ENCODE measurements at regions of chr20 and their contacts with region 1.

Region 1: GRCh38 chr20:50904067-50904570 is 27.1 kb downstream of the ADNP start:
- DNase-seq: no peak
- H3K4me3 ChIP-seq: peak overlapping the region in 1 of 2 donors; percentile 0
- H3K27ac ChIP-seq: no peak overlapping the region
- H3K4me1 ChIP-seq: peaks cover 0 to 20% of the 10 kb centered on the region in 2 donors
- H3K27me3 ChIP-seq: no peaks in the 10 kb centered on the region
- CTCF ChIP-seq: no peak

Region 2: DNA sequence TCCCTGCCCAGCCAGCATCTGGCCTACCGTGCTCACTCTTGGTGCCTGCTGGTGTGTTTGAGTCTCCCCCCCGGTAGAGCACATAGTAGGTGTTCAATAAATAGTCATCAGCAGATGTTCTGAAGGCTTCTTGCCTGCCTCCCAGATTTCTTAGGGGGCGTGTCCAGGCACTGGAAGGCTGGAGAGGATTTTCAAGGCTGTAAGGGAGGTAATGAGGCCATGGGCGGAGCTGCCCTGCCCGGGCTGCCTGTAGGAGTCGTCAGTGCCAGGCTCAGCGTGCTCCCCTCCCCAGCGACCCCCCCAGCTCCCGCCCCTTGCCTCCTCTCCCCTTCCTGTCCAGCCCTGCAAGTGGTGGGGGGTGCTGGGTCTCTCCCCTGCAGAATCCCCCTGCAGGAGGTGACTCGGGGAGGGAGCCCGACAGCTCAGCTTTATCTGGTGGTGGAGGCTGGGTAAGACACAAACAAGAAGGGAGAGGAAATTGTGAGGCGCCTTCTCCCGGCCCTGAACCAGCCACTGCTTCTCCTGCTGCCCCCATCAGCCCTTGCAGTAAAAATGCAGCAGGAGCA is 53.3 kb before region 1 on chr20:
- intact Hi-C with region 1: loop called (anchors 5 kb)
- DNase-seq: no peak
- H3K4me3 ChIP-seq: no peak overlapping the region
- H3K27ac ChIP-seq: no peak overlapping the region
- H3K4me1 ChIP-seq: peaks cover 0 to 14% of the 10 kb centered on the region in 2 donors
- H3K27me3 ChIP-seq: no peaks in the 10 kb centered on the region
- CTCF ChIP-seq: no peak

Region 3: GRCh38 chr20:50929299-50930138 is 25.4 kb after region 1 on chr20:
- intact Hi-C with region 1: no loop called
- DNase-seq: peak; percentile 65 to 96
- H3K4me3 ChIP-seq: peak overlapping the region; percentile 89 to 98
- H3K27ac ChIP-seq: peak overlapping the region; percentile 72 to 75
- H3K4me1 ChIP-seq: peaks cover 0 to 18% of the 10 kb centered on the region in 2 donors
- H3K27me3 ChIP-seq: no peaks in the 10 kb centered on the region
- CTCF ChIP-seq: peak; percentile 92 to 95 (median 93)

Measured in ascending aorta (tissue), 2 donors.